ENCODE measurements at regions of chr2 and their contacts with region 1.

Region 1: DNA sequence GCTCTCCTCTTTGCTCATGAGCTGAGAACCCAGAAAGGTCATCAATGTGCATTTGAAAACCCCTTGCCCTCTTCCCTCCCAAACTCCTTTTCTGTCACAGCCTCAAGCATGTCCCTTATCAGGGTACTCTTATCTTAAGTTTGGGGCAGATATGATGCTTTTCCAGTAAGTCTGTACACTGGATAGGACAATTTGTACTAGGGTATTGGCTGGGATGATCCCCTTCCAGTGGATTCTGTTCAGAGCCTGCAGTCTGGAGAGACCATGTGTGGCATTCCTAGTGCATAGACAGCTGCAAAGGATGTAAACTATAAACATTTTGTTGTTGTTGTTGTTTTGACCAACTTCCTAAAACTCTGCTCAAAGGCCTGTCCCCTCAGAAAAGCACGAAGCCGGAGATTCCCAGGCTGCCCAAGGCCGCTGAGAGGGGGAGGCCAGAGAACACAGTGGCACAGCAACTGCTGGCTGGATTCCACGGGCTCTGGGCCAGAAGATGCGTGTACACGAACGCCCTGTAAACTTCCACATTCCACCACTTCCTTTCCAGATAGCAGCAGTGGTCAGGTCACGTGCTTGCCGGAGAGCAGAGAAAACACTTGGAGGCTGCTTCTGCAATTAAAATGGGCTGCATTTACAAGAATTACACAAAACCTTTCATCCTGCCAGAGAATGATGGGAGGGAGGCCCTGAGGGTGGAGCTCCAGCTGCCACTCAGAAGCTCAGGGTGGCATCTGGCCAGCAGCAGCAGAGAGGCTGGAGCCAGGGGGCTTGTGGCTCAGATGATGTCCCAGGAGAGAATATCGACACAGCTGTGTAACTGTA is 42.1 kb downstream of the BMP10 start:
- DNase-seq: peak; percentile 98
- H3K4me3 Mint-ChIP-seq: no peak overlapping the region
- H3K27ac Mint-ChIP-seq: peak overlapping the region; percentile 14
- H3K4me1 Mint-ChIP-seq: peaks cover 42% of the 10 kb centered on the region
- H3K27me3 Mint-ChIP-seq: no peaks in the 10 kb centered on the region
- CTCF ChIP-seq: no peak

Region 2: GRCh38 chr2:68807821-68808266 is 21.3 kb before region 1 on chr2:
- CTCF ChIA-PET with region 1: no interaction called
- POLR2A ChIA-PET with region 1: interaction called, 9 read pairs
- intact Hi-C with region 1: loop called (anchors 1 kb)
- DNase-seq: peak; percentile 91
- H3K4me3 Mint-ChIP-seq: peak overlapping the region; percentile 27
- H3K27ac Mint-ChIP-seq: peak overlapping the region; percentile 68
- H3K4me1 Mint-ChIP-seq: peaks cover 74% of the 10 kb centered on the region
- H3K27me3 Mint-ChIP-seq: no peaks in the 10 kb centered on the region
- CTCF ChIP-seq: no peak

Region 3: GRCh38 chr2:68857855-68858456 is 28.9 kb after region 1 on chr2:
- CTCF ChIA-PET with region 1: no interaction called
- POLR2A ChIA-PET with region 1: no interaction called
- intact Hi-C with region 1: no loop called
- DNase-seq: no peak
- H3K4me3 Mint-ChIP-seq: no peak overlapping the region
- H3K27ac Mint-ChIP-seq: no peak overlapping the region
- H3K4me1 Mint-ChIP-seq: no peaks in the 10 kb centered on the region
- H3K27me3 Mint-ChIP-seq: peaks cover 21% of the 10 kb centered on the region
- CTCF ChIP-seq: no peak

Measured in MCF 10A (cell line).